Stomach (tissue), 19 donors: ENCODE measurements at regions of chr18 and their contacts with region 1.

Region 1: DNA sequence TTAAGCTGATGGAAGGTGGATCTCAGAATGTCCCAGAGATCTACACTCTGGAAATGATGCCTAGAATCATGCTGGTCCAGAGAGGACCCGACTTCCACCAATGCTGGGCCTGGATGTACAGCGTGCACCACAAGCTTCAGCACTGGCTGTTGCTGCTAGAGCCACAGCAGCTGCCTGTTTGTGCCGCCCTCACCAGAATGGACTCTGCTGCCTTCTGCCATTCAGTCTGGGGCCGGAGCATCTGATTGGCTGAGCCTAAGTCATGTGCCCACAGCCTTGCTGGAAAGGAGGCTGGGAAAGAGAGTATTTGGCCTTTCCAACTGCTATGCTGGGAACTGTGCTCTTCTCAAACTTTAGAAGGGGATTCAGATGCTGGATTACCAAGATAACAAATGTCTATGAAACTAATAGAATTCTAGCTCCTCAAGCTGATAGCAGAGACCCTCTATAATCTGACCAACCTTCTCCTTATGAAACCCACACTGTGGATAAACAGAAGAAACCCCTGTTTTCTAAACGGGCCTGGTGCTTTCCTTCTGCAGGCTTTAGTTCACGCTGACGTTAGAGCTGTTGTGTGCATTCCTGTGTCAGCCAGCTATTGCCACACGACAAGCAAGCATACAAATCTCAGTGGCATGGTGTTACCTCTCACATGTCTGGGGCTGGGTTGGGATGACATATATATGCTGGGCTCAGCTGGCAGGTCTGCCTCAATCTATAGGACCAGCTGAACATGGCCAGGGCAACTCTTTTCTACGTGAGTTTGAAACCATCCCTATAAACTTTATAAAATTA is 4.1 kb upstream of the LOXHD1 start:
- DNase-seq: peak in 1 of 2 donors; percentile 47
- H3K4me3 ChIP-seq: no peak overlapping the region
- H3K27ac ChIP-seq: no peak overlapping the region
- H3K4me1 ChIP-seq: no peaks in the 10 kb centered on the region
- H3K27me3 ChIP-seq: peaks cover 0 to 5% (median 0%) of the 10 kb centered on the region in 3 donors
- CTCF ChIP-seq: no peak
- EP300 ChIP-seq: no peak
- POLR2A ChIP-seq: no peak

Region 2: GRCh38 chr18:46167971-46168370 is 493.2 kb before region 1 on chr18:
- intact Hi-C with region 1: loop called (anchors 10 kb)
- DNase-seq: peak; percentile 46 to 71
- H3K4me3 ChIP-seq: peak overlapping the region in 2 of 4 donors; percentile 3 to 15
- H3K27ac ChIP-seq: no peak overlapping the region
- H3K4me1 ChIP-seq: peaks cover 0 to 6% (median 3%) of the 10 kb centered on the region in 4 donors
- H3K27me3 ChIP-seq: no peaks in the 10 kb centered on the region
- CTCF ChIP-seq: no peak
- EP300 ChIP-seq: no peak
- POLR2A ChIP-seq: no peak

Region 3: GRCh38 chr18:46281185-46282176 is 379.7 kb before region 1 on chr18:
- intact Hi-C with region 1: loop called (anchors 10 kb)
- DNase-seq: peak; percentile 63 to 89
- H3K4me3 ChIP-seq: no peak overlapping the region
- H3K27ac ChIP-seq: no peak overlapping the region
- H3K4me1 ChIP-seq: peaks cover 0 to 7% (median 5%) of the 10 kb centered on the region in 4 donors
- H3K27me3 ChIP-seq: no peaks in the 10 kb centered on the region
- CTCF ChIP-seq: peak in 5 of 7 experiments; percentile 57 to 90 (median 82)
- EP300 ChIP-seq: no peak
- POLR2A ChIP-seq: no peak

Region 4: GRCh38 chr18:46356278-46357033 is 304.7 kb before region 1 on chr18:
- intact Hi-C with region 1: no loop called
- DNase-seq: no peak
- H3K4me3 ChIP-seq: no peak overlapping the region
- H3K27ac ChIP-seq: no peak overlapping the region
- H3K4me1 ChIP-seq: peaks cover 0 to 7% (median 0%) of the 10 kb centered on the region in 4 donors
- H3K27me3 ChIP-seq: no peaks in the 10 kb centered on the region
- CTCF ChIP-seq: no peak
- EP300 ChIP-seq: no peak
- POLR2A ChIP-seq: no peak

Region 5: GRCh38 chr18:46596119-46596518 is 65.0 kb before region 1 on chr18:
- intact Hi-C with region 1: no loop called
- DNase-seq: no peak
- H3K4me3 ChIP-seq: no peak overlapping the region
- H3K27ac ChIP-seq: no peak overlapping the region
- H3K4me1 ChIP-seq: no peaks in the 10 kb centered on the region
- H3K27me3 ChIP-seq: no peaks in the 10 kb centered on the region
- CTCF ChIP-seq: no peak
- EP300 ChIP-seq: no peak
- POLR2A ChIP-seq: no peak